Activated CD4-positive, alpha-beta T cell treated with anti-CD3 and anti-CD28 coated beads for 36 hours (primary cell): ENCODE measurements at regions of chr3 and their contacts with region 1.

Region 1: GRCh38 chr3:170357176-170357919 is at the start of gene SKIL:
- DNase-seq: peak; percentile 97
- ATAC-seq: peak; percentile 77
- H3K4me3 Mint-ChIP-seq: peak within 1 kb of the TSS; percentile 78
- H3K27ac Mint-ChIP-seq: peak within 1 kb of the TSS; percentile 96
- H3K4me1 Mint-ChIP-seq: peaks cover 38% of the 10 kb centered on the region
- H3K27me3 Mint-ChIP-seq: no peaks in the 10 kb centered on the region
- total RNA-seq, gene SKIL: 15.6 to 20.3 TPM

Region 2: GRCh38 chr3:169764452-169765274 is 592.7 kb before region 1 on chr3 and contains the start of gene TERC:
- CTCF ChIA-PET with region 1: no interaction called
- POLR2A ChIA-PET with region 1: no interaction called
- intact Hi-C with region 1: loop called in 1 of 2 experiments (anchors 1 kb)
- DNase-seq: peak; percentile 95
- ATAC-seq: peak; percentile 84
- H3K4me3 Mint-ChIP-seq: peak within 1 kb of the TSS; percentile 91
- H3K27ac Mint-ChIP-seq: peak within 1 kb of the TSS; percentile 98
- H3K4me1 Mint-ChIP-seq: peaks cover 23% of the 10 kb centered on the region
- H3K27me3 Mint-ChIP-seq: no peaks in the 10 kb centered on the region
- total RNA-seq, gene TERC: 2.6 to 11.1 TPM

Region 3: DNA sequence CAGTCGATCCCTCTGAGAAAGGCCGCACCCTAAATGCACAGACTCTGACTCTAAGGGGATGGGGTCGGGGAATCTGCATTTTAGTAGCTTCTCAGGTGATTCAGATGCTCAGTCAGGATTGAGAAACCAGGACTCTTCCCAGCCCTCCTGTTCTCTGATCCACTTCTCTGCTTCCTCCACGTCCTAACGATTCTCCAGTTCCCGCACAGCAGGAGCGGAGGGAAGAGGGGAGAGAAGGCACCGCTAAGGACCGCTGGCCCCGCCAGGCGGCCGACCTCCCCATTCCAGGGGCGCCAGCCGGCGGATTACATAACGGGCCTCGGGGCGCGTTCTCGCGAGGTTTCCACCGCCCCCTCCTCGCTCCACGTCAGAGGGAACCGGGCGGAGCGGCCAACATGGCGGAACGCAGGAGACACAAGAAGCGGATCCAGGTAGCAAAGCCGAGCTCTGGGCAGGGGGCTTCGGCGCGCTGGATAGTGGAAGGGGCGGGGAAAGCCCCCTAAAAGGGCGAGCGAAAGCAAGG is 390.9 kb before region 1 on chr3 and contains the start of gene SEC62:
- CTCF ChIA-PET with region 1: no interaction called
- POLR2A ChIA-PET with region 1: interaction called, 10 read pairs
- intact Hi-C with region 1: loop called in 1 of 2 experiments (anchors 1 kb)
- DNase-seq: peak; percentile 97
- ATAC-seq: peak; percentile 85
- H3K4me3 Mint-ChIP-seq: peak within 1 kb of the TSS; percentile 83
- H3K27ac Mint-ChIP-seq: peak within 1 kb of the TSS; percentile 95
- H3K4me1 Mint-ChIP-seq: peaks cover 62% of the 10 kb centered on the region
- H3K27me3 Mint-ChIP-seq: no peaks in the 10 kb centered on the region
- total RNA-seq, gene SEC62: 62.8 to 74.7 TPM

Region 4: DNA sequence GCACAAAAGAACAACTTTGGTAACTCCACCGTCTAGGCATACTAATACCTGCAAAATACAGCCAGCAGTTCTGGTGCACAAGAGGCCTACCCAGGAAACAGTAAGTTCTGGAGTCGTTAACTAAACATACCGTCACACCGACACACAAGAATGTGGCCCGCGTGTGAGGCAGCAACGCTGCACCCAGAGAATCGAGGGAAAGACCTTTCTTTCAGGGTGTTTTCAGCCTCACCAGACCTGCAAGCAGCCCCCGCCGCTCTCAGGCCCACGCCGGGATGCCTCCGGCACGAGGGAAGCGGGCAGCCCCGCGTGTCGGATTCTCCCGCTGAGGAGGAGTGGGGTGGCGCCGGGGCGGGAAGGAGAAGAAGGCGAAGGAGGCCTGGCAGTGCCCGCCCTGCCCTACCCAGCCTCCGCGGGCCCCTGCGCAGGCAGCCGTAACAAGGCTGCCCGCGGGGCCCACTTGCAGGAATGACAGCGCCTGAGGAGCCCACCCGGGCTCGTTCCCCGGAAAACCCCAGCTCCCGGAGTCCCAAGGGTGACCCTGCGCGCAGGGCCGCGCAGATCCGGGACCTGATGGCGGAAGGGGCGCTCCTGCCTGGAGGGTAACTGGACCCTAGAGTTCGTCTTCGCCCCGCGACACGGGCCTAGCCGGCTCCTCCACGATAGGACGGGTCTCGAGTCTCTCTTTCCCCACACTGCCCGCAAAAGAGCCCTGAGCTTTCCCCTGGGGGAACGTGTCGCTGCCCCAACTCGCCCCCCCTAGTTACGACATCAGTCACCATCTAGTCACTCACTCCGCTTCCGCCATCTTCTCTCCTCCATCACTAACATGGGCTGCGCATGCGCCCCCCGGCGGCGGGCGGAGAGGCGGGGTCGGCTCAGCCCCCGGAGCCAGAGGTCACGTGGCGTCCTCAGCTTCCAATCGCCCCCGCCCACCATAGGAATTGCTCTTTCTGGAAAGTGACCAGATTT is 176.2 kb before region 1 on chr3 and contains the start of gene PHC3:
- CTCF ChIA-PET with region 1: no interaction called
- POLR2A ChIA-PET with region 1: no interaction called
- intact Hi-C with region 1: loop called (anchors 1 to 2 kb)
- DNase-seq: peak; percentile 96
- ATAC-seq: peak; percentile 79
- H3K4me3 Mint-ChIP-seq: peak within 1 kb of the TSS; percentile 97
- H3K27ac Mint-ChIP-seq: peak within 1 kb of the TSS; percentile 99
- H3K4me1 Mint-ChIP-seq: peaks cover 21% of the 10 kb centered on the region
- H3K27me3 Mint-ChIP-seq: no peaks in the 10 kb centered on the region
- total RNA-seq, gene PHC3: 47.6 to 83.9 TPM

Region 5: GRCh38 chr3:170705131-170705530 is 347.8 kb after region 1 on chr3:
- CTCF ChIA-PET with region 1: no interaction called
- POLR2A ChIA-PET with region 1: interaction called, 11 read pairs
- intact Hi-C with region 1: no loop called
- DNase-seq: no peak
- ATAC-seq: no peak
- H3K4me3 Mint-ChIP-seq: no peak overlapping the region
- H3K27ac Mint-ChIP-seq: no peak overlapping the region
- H3K4me1 Mint-ChIP-seq: no peaks in the 10 kb centered on the region
- H3K27me3 Mint-ChIP-seq: peaks cover 11% of the 10 kb centered on the region

Region 6: GRCh38 chr3:171459942-171460724 is 1102.8 kb after region 1 on chr3 and contains the start of gene TNIK:
- CTCF ChIA-PET with region 1: no interaction called
- POLR2A ChIA-PET with region 1: no interaction called
- intact Hi-C with region 1: loop called in 1 of 2 experiments (anchors 10 kb)
- DNase-seq: peak; percentile 96
- ATAC-seq: peak; percentile 82
- H3K4me3 Mint-ChIP-seq: peak within 1 kb of the TSS; percentile 94
- H3K27ac Mint-ChIP-seq: peak within 1 kb of the TSS; percentile 95
- H3K4me1 Mint-ChIP-seq: peaks cover 40% of the 10 kb centered on the region
- H3K27me3 Mint-ChIP-seq: no peaks in the 10 kb centered on the region
- total RNA-seq, gene TNIK: 28.8 to 34.2 TPM